CD4-positive, alpha-beta memory T cell (primary cell): ENCODE measurements at regions of chr2 and their contacts with region 1.

Region 1: GRCh38 chr2:30711646-30712085 is 95.6 kb downstream of the CAPN13 start:
- DNase-seq: peak; percentile 84 to 90 (median 85)
- H3K4me3 ChIP-seq: no peak overlapping the region
- H3K4me3 Mint-ChIP-seq: no peak overlapping the region
- H3K27ac ChIP-seq: no peak overlapping the region
- H3K27ac Mint-ChIP-seq: no peak overlapping the region
- H3K4me1 ChIP-seq: no peaks in the 10 kb centered on the region
- H3K4me1 Mint-ChIP-seq: peaks cover 0 to 9% (median 3%) of the 10 kb centered on the region in 4 donors
- H3K27me3 ChIP-seq: no peaks in the 10 kb centered on the region
- H3K27me3 Mint-ChIP-seq: peaks cover 0 to 3% of the 10 kb centered on the region in 2 donors

Region 2: GRCh38 chr2:30089171-30089570 is 622.5 kb before region 1 on chr2:
- CTCF ChIA-PET with region 1: interaction called, 10 read pairs
- POLR2A ChIA-PET with region 1: interaction called, 3 read pairs
- intact Hi-C with region 1: loop called (anchors 1 kb)
- DNase-seq: no peak
- H3K4me3 ChIP-seq: no peak overlapping the region
- H3K4me3 Mint-ChIP-seq: no peak overlapping the region
- H3K27ac ChIP-seq: no peak overlapping the region
- H3K27ac Mint-ChIP-seq: no peak overlapping the region
- H3K4me1 ChIP-seq: no peaks in the 10 kb centered on the region
- H3K4me1 Mint-ChIP-seq: peaks cover 0 to 5% (median 3%) of the 10 kb centered on the region in 4 donors
- H3K27me3 ChIP-seq: peaks cover 18% of the 10 kb centered on the region
- H3K27me3 Mint-ChIP-seq: peaks cover 32% of the 10 kb centered on the region in 2 donors

Region 3: DNA sequence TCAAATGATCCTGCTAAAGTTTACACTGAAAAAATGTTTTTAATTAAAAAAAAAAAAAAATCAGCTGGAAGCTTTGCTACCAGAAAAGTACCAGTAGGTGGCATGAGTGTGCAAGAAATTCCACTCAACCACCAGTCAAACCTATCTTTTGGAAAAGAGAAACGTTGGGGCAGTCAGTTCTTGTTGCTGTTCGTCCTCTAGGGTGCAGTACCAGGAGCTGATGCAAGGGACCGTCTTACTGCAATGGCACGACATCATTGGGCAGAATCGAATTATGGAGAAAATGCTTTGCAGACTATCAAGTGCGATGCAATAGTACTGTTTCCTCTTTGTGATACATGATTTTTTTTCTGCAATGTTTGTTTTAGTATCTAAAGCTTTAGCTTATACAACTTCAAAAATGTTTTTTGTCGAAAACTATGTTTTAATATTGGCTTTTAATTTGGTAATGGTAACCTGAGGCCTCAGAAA is 546.6 kb before region 1 on chr2:
- CTCF ChIA-PET with region 1: interaction called, 574 read pairs
- POLR2A ChIA-PET with region 1: interaction called, 24 read pairs
- intact Hi-C with region 1: loop called (anchors 1 kb)
- DNase-seq: peak; percentile 77 to 85 (median 83)
- H3K4me3 ChIP-seq: no peak overlapping the region
- H3K4me3 Mint-ChIP-seq: peak overlapping the region in 1 of 8 donors; percentile 17
- H3K27ac ChIP-seq: no peak overlapping the region
- H3K27ac Mint-ChIP-seq: peak overlapping the region in 2 of 7 donors; percentile 47 to 88
- H3K4me1 ChIP-seq: peaks cover 4% of the 10 kb centered on the region
- H3K4me1 Mint-ChIP-seq: peaks cover 0 to 10% (median 3%) of the 10 kb centered on the region in 4 donors
- H3K27me3 ChIP-seq: no peaks in the 10 kb centered on the region
- H3K27me3 Mint-ChIP-seq: no peaks in the 10 kb centered on the region

Region 4: DNA sequence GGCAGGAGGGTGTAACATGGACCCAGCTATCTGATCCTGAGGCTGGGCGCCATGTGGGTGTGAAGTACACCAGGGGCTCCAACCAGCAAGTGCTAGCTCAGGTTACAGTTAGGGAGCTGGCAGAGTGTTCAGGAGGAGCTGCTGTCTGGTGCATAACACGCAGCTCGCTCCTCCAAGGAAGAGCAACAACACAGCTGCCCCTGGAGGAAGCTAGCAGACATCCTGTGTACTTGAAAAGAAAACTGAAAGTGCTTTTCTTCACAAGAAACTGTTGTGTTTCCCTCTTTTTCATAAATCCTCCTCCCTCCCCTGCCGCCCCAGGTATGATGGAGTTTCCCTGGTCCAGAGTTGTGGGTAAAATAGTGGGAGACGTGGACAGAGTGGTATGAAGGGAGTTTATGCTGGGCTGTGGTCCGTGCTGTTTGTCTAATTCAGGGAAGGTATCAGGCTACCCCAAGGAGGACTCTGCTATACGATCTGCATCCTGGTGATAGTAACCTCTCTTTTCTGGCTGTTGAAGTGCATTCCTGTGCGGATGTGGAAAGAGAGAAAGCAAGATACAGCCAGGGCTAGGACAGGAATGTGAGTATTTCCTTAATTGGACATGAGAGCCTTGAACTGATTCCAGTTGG is 486.4 kb before region 1 on chr2:
- CTCF ChIA-PET with region 1: interaction called, 109 read pairs
- POLR2A ChIA-PET with region 1: no interaction called
- intact Hi-C with region 1: loop called (anchors 2 kb)
- DNase-seq: peak; percentile 63 to 75 (median 67)
- H3K4me3 ChIP-seq: peak overlapping the region; percentile 54 to 79
- H3K4me3 Mint-ChIP-seq: peak overlapping the region; percentile 88 to 99 (median 94)
- H3K27ac ChIP-seq: peak overlapping the region; percentile 95
- H3K27ac Mint-ChIP-seq: peak overlapping the region; percentile 96 to 100 (median 99)
- H3K4me1 ChIP-seq: peaks cover 75% of the 10 kb centered on the region
- H3K4me1 Mint-ChIP-seq: peaks cover 55 to 84% (median 70%) of the 10 kb centered on the region in 4 donors
- H3K27me3 ChIP-seq: no peaks in the 10 kb centered on the region
- H3K27me3 Mint-ChIP-seq: no peaks in the 10 kb centered on the region

Region 5: DNA sequence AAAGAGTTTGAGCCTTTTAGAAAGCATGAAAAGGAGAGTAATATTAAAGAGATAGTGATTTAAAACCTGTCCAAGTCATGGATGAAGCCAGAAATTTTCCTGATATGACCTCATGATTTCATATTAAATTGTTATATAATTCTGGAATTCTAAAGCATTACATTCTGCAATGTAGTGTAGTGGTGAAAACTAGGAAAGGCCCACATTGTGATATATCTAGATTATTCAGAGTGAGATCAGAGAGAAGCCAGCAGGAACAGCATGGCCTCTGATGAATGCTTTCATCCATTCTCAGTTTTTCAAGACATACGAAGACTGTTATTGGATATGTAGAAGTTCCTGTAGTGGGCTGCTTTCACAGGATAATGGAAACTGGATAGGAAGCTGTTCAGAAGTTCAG is 165.8 kb before region 1 on chr2:
- CTCF ChIA-PET with region 1: no interaction called
- POLR2A ChIA-PET with region 1: no interaction called
- intact Hi-C with region 1: no loop called
- DNase-seq: no peak
- H3K4me3 ChIP-seq: no peak overlapping the region
- H3K4me3 Mint-ChIP-seq: no peak overlapping the region
- H3K27ac ChIP-seq: no peak overlapping the region
- H3K27ac Mint-ChIP-seq: no peak overlapping the region
- H3K4me1 ChIP-seq: no peaks in the 10 kb centered on the region
- H3K4me1 Mint-ChIP-seq: peaks cover 8 to 19% (median 10%) of the 10 kb centered on the region in 4 donors
- H3K27me3 ChIP-seq: no peaks in the 10 kb centered on the region
- H3K27me3 Mint-ChIP-seq: no peaks in the 10 kb centered on the region

Region 6: DNA sequence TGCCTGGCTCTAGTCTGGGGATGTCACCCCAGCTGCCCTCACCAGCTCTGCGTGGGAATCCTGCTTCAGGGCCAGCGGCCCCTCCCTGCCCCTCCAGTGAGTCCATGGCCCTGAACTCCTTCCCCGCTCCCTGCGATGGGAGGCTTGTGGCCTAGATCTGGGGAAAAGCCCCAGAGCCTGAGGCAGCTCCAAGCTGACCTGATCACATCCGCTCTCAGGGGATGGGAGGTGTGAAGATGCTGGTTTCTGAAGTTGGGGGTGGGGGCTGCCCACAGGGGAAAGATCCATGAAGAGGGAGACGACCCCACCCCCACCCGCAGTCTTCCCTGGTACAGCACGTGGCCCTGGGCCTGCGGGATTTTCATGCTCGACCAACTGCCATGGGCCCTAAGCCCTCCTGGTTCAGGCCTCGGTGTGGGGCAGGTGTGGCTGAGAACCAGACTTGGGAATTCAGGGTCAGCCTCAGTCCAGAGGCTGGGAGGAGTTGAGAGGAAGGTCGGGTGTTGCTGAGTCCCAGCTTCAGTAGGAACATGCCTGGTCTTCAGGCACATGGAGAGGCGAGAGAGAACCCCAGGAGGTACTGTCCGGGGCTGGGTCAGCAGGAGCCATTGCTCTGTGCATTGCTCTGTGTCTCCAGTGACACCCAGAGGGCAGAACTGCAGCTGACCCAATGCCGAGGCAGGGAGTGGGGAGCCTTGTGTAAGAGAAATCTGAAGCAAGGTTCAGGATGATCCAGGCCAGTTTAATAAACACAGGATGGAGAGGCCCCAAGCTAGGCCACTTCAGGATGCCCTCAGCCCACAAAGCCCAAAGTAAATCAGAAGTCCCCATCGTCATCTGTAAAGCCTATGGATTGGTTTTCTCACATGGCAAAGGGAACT is 19.5 kb before region 1 on chr2:
- CTCF ChIA-PET with region 1: interaction called, 14 read pairs
- POLR2A ChIA-PET with region 1: no interaction called
- intact Hi-C with region 1: no loop called
- DNase-seq: no peak
- H3K4me3 ChIP-seq: no peak overlapping the region
- H3K4me3 Mint-ChIP-seq: no peak overlapping the region
- H3K27ac ChIP-seq: no peak overlapping the region
- H3K27ac Mint-ChIP-seq: no peak overlapping the region
- H3K4me1 ChIP-seq: no peaks in the 10 kb centered on the region
- H3K4me1 Mint-ChIP-seq: no peaks in the 10 kb centered on the region
- H3K27me3 ChIP-seq: no peaks in the 10 kb centered on the region
- H3K27me3 Mint-ChIP-seq: peaks cover 3 to 7% of the 10 kb centered on the region in 2 donors

Region 7: DNA sequence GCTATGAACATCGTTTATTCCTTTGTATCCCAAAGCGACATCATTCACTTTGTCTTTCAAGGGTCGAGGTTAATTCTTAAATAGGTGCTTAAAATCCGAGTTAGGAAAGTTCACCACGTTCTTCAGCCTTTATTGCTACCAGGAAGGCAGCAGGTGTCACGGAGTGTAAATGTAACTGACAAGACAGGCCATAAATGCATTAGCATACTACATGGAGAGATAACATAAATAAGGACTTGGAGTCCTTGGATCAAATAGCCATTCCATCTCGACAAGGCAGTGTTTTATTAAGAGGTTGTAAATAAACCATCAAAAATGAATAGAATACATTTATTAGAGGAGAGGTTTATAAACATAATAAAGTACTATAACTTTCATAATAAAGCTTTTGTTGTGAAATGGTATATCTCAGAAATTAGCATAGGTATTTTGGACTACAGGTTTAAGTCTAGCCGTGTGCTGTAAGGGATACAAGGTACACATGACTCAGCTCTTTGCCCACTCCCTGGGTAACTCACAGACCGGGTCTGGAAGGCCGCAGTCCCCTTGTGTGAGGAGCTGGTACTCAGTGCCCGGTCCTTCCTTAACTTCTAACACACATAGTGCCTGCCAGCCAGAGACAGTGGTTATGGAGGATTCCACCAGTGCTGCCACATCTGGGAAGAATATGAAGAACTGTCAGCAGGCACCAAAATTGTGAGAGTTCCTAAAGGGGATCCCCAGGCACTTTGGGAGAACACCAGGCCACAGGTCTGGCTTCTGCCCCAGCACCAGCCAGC is 66.2 kb after region 1 on chr2:
- CTCF ChIA-PET with region 1: no interaction called
- POLR2A ChIA-PET with region 1: no interaction called
- intact Hi-C with region 1: no loop called
- DNase-seq: no peak
- H3K4me3 ChIP-seq: no peak overlapping the region
- H3K4me3 Mint-ChIP-seq: no peak overlapping the region
- H3K27ac ChIP-seq: no peak overlapping the region
- H3K27ac Mint-ChIP-seq: no peak overlapping the region
- H3K4me1 ChIP-seq: no peaks in the 10 kb centered on the region
- H3K4me1 Mint-ChIP-seq: peaks cover 0 to 8% (median 3%) of the 10 kb centered on the region in 4 donors
- H3K27me3 ChIP-seq: no peaks in the 10 kb centered on the region
- H3K27me3 Mint-ChIP-seq: peaks cover 6 to 7% of the 10 kb centered on the region in 2 donors

Region 8: DNA sequence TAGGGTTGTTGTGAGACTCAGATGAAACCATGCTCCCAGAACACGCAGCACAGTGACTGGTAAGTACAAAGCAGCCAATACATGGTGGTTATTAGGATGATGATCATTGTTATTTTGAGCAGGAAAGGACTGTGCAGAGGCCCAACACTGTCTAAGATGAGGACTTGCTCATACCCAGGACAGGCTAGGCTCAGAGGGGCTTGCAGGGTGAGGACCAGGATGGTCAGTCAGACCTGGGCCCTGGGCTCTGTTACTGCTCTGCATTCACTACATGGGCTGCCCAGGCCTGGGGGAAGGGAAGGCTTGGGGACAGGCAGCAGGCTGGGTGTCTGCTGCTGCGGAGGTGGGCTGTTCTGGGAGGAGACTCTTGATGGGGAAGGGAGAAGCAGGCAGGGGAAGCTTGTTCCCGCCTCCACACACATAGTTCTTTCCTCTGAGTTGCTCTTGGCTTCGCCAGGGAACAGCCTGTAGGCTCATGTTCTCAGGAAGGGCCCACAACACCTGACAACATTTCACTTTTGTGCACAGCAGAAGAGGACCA is 78.1 kb after region 1 on chr2:
- CTCF ChIA-PET with region 1: no interaction called
- POLR2A ChIA-PET with region 1: no interaction called
- intact Hi-C with region 1: no loop called
- DNase-seq: no peak
- H3K4me3 ChIP-seq: no peak overlapping the region
- H3K4me3 Mint-ChIP-seq: no peak overlapping the region
- H3K27ac ChIP-seq: no peak overlapping the region
- H3K27ac Mint-ChIP-seq: no peak overlapping the region
- H3K4me1 ChIP-seq: no peaks in the 10 kb centered on the region
- H3K4me1 Mint-ChIP-seq: peaks cover 0 to 2% (median 0%) of the 10 kb centered on the region in 4 donors
- H3K27me3 ChIP-seq: peaks cover 4% of the 10 kb centered on the region
- H3K27me3 Mint-ChIP-seq: peaks cover 8 to 21% of the 10 kb centered on the region in 2 donors

Region 9: DNA sequence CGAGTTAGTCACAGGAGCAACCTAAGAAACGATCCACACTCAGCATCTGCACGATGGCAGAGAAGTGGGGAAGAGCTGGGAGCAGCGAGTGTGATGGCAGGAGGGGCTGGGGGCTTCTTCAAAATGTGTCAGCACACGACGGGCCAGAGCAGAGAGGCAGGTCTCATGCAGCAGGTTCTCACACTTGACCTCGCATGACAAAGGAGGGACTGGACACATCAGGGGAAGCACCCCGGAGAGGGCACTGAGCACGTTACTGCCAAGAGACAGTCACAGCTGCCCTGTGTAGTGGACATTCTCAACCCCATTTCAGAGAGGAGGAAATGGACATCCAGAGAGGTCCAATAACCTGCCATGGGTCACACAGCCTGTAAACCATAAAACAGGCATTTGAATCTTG is 199.7 kb after region 1 on chr2:
- CTCF ChIA-PET with region 1: no interaction called
- POLR2A ChIA-PET with region 1: no interaction called
- intact Hi-C with region 1: no loop called
- DNase-seq: no peak
- H3K4me3 ChIP-seq: no peak overlapping the region
- H3K4me3 Mint-ChIP-seq: no peak overlapping the region
- H3K27ac ChIP-seq: no peak overlapping the region
- H3K27ac Mint-ChIP-seq: no peak overlapping the region
- H3K4me1 ChIP-seq: no peaks in the 10 kb centered on the region
- H3K4me1 Mint-ChIP-seq: no peaks in the 10 kb centered on the region
- H3K27me3 ChIP-seq: no peaks in the 10 kb centered on the region
- H3K27me3 Mint-ChIP-seq: peaks cover 3 to 5% of the 10 kb centered on the region in 2 donors

Region 10: GRCh38 chr2:31233741-31234682 is 522.3 kb after region 1 on chr2 and contains the start of gene EHD3:
- CTCF ChIA-PET with region 1: interaction called, 6 read pairs
- POLR2A ChIA-PET with region 1: no interaction called
- intact Hi-C with region 1: loop called (anchors 1 kb)
- DNase-seq: peak; percentile 63 to 74 (median 70)
- H3K4me3 ChIP-seq: peak within 1 kb of the TSS; percentile 49 to 66
- H3K4me3 Mint-ChIP-seq: peak within 1 kb of the TSS; percentile 81 to 87 (median 83)
- H3K27ac ChIP-seq: peak within 1 kb of the TSS; percentile 23
- H3K27ac Mint-ChIP-seq: peak within 1 kb of the TSS in 6 of 7 donors; percentile 7 to 87 (median 77)
- H3K4me1 ChIP-seq: peaks cover 22% of the 10 kb centered on the region
- H3K4me1 Mint-ChIP-seq: peaks cover 17 to 36% (median 25%) of the 10 kb centered on the region in 4 donors
- H3K27me3 ChIP-seq: peaks cover 6% of the 10 kb centered on the region
- H3K27me3 Mint-ChIP-seq: peaks cover 0 to 1% of the 10 kb centered on the region in 2 donors
- total RNA-seq, gene EHD3: 4.0 to 4.4 TPM